CD14-positive monocyte (primary cell): ENCODE measurements at regions of chr7 and their contacts with region 1.

Region 1: DNA sequence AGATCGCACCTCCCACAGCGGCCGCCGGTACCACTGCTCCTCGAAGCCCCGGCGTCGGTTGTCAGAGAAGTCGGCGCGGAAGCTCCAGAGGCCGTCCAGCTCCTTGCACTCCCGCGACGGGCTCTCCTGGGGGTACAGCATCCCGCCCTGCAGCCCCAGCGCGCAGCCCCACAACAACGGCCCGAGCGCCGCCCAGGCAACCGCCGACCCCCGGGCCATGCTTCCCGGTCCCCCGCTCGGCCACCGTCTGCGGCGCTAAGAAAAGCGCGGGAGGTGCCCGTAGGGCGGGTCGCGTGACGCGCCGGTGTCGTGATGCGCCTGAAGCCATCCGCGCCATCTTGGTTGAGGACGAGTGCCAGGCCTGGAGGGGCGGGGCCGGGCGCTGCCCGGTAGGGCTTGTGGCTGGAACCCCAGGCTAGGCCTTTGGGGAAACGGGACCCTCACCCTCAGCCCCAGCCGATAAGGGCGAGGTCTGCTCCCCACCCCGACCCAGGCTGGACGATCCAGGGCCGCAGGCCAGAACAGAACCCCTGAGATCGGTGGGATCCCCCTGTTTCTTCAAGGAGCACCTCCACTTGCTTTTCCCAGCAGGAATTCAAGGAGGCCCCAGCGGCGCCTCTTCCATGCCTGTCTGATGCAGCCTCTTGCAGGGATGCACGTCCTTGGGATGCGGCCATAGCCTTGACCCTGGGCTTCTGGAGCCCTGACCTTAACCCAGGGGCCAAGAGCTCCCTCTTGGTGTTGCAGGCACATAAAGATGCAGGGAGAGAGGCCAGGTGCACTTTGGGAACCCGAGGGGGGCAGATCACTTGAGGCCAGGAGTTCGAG is at the start of gene GUSB:
- DNase-seq: peak; percentile 78 to 81 (median 79)
- H3K4me3 ChIP-seq: peak within 1 kb of the TSS; percentile 62 to 87 (median 79)
- H3K4me3 Mint-ChIP-seq: peak within 1 kb of the TSS; percentile 83 to 91
- H3K27ac ChIP-seq: peak within 1 kb of the TSS; percentile 96
- H3K27ac Mint-ChIP-seq: peak within 1 kb of the TSS; percentile 96 to 99 (median 98)
- H3K4me1 ChIP-seq: peaks cover 21 to 32% of the 10 kb centered on the region in 2 donors
- H3K4me1 Mint-ChIP-seq: peaks cover 7% of the 10 kb centered on the region
- H3K27me3 ChIP-seq: no peaks in the 10 kb centered on the region
- H3K27me3 Mint-ChIP-seq: peaks cover 0 to 2% (median 0%) of the 10 kb centered on the region in 3 donors
- CTCF ChIP-seq: no peak
- polyA plus RNA-seq, gene GUSB: 113 to 121 (median 115) TPM

Region 2: GRCh38 chr7:65750511-65751344 is 231.5 kb before region 1 on chr7:
- intact Hi-C with region 1: loop called in 1 of 2 experiments (anchors 5 kb)
- DNase-seq: peak; percentile 81 to 90 (median 83)
- H3K4me3 ChIP-seq: peak overlapping the region; percentile 76 to 96 (median 89)
- H3K4me3 Mint-ChIP-seq: peak overlapping the region; percentile 87 to 98
- H3K27ac ChIP-seq: peak overlapping the region; percentile 51 to 90
- H3K27ac Mint-ChIP-seq: peak overlapping the region; percentile 89 to 94 (median 90)
- H3K4me1 ChIP-seq: peaks cover 11 to 12% of the 10 kb centered on the region in 2 donors
- H3K4me1 Mint-ChIP-seq: peaks cover 15% of the 10 kb centered on the region
- H3K27me3 ChIP-seq: no peaks in the 10 kb centered on the region
- H3K27me3 Mint-ChIP-seq: peaks cover 0 to 2% (median 0%) of the 10 kb centered on the region in 3 donors
- CTCF ChIP-seq: no peak

Region 3: DNA sequence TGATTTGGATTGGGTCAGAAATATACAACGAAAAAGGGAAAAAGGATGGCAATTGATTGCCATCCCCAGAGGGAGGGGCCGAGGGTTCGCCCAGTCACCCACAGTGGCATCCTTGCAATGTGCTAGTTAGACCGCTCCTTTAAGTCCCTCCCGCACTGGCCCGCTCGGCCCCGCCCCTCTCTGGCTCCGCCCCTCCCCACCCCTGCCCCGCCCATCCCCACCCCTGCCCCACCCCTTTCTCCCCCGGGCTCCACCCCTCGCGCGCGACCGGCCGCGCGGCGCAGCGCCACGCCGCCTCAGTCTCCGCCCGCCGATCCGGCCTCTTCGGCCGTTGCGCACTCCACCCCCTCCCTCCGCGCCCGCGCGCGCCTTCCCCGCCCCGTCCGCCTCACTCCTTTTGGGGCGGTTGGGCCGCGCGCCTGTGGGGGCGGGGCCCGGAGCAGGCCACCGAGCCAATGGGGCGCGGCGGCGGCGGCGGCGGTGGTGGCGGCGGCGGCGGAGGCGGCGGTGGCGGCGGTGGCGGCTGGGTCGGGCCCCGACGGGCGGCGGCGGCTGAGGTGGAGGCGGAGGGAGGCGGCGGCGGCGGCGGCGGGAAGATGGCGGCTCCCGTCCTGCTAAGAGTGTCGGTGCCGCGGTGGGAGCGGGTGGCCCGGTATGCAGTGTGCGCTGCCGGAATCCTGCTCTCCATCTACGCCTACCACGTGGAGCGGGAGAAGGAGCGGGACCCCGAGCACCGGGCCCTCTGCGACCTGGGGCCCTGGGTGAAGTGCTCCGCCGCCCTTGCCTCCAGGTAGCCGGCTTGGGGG is 109.2 kb before region 1 on chr7 and contains the start of gene VKORC1L1:
- intact Hi-C with region 1: loop called (anchors 5 kb)
- DNase-seq: peak; percentile 91 to 95 (median 95)
- H3K4me3 ChIP-seq: peak within 1 kb of the TSS; percentile 72 to 97 (median 76)
- H3K4me3 Mint-ChIP-seq: peak within 1 kb of the TSS; percentile 80 to 91
- H3K27ac ChIP-seq: peak within 1 kb of the TSS in 1 of 2 donors; percentile 8
- H3K27ac Mint-ChIP-seq: peak within 1 kb of the TSS in 6 of 7 donors; percentile 86 to 96 (median 92)
- H3K4me1 ChIP-seq: peaks cover 30 to 32% of the 10 kb centered on the region in 2 donors
- H3K4me1 Mint-ChIP-seq: peaks cover 26% of the 10 kb centered on the region
- H3K27me3 ChIP-seq: no peaks in the 10 kb centered on the region
- H3K27me3 Mint-ChIP-seq: no peaks in the 10 kb centered on the region
- CTCF ChIP-seq: no peak
- polyA plus RNA-seq, gene VKORC1L1: 1.9 to 3.2 (median 2.7) TPM

Region 4: GRCh38 chr7:66075590-66076461 is 93.6 kb after region 1 on chr7 and contains the start of gene ASL:
- intact Hi-C with region 1: loop called in 1 of 2 experiments (anchors 10 kb)
- DNase-seq: peak; percentile 89 to 92 (median 89)
- H3K4me3 ChIP-seq: peak within 1 kb of the TSS; percentile 83 to 95 (median 95)
- H3K4me3 Mint-ChIP-seq: peak within 1 kb of the TSS; percentile 81 to 90
- H3K27ac ChIP-seq: peak within 1 kb of the TSS; percentile 50 to 94
- H3K27ac Mint-ChIP-seq: peak within 1 kb of the TSS; percentile 69 to 92 (median 86)
- H3K4me1 ChIP-seq: peaks cover 17 to 19% of the 10 kb centered on the region in 2 donors
- H3K4me1 Mint-ChIP-seq: peaks cover 17% of the 10 kb centered on the region
- H3K27me3 ChIP-seq: no peaks in the 10 kb centered on the region
- H3K27me3 Mint-ChIP-seq: peaks cover 1 to 8% (median 4%) of the 10 kb centered on the region in 3 donors
- CTCF ChIP-seq: no peak
- polyA plus RNA-seq, gene ASL: 29.7 to 51.6 (median 35.9) TPM

Region 5: GRCh38 chr7:66150471-66150870 is 168.3 kb after region 1 on chr7:
- intact Hi-C with region 1: no loop called
- DNase-seq: no peak
- H3K4me3 ChIP-seq: no peak overlapping the region
- H3K4me3 Mint-ChIP-seq: no peak overlapping the region
- H3K27ac ChIP-seq: peak overlapping the region in 1 of 2 donors; percentile 56
- H3K27ac Mint-ChIP-seq: peak overlapping the region in 5 of 7 donors; percentile 24 to 81 (median 56)
- H3K4me1 ChIP-seq: no peaks in the 10 kb centered on the region
- H3K4me1 Mint-ChIP-seq: peaks cover 6% of the 10 kb centered on the region
- H3K27me3 ChIP-seq: no peaks in the 10 kb centered on the region
- H3K27me3 Mint-ChIP-seq: no peaks in the 10 kb centered on the region
- CTCF ChIP-seq: no peak

Region 6: GRCh38 chr7:66493235-66494181 is 511.3 kb after region 1 on chr7:
- intact Hi-C with region 1: loop called in 1 of 2 experiments (anchors 5 kb)
- DNase-seq: peak; percentile 98
- H3K4me3 ChIP-seq: peak overlapping the region; percentile 54 to 75 (median 73)
- H3K4me3 Mint-ChIP-seq: peak overlapping the region; percentile 80 to 89
- H3K27ac ChIP-seq: peak overlapping the region; percentile 83 to 97
- H3K27ac Mint-ChIP-seq: peak overlapping the region; percentile 97 to 99 (median 98)
- H3K4me1 ChIP-seq: peaks cover 13 to 23% of the 10 kb centered on the region in 2 donors
- H3K4me1 Mint-ChIP-seq: peaks cover 22% of the 10 kb centered on the region
- H3K27me3 ChIP-seq: no peaks in the 10 kb centered on the region
- H3K27me3 Mint-ChIP-seq: peaks cover 0 to 7% (median 2%) of the 10 kb centered on the region in 3 donors
- CTCF ChIP-seq: peak; percentile 24

Region 7: GRCh38 chr7:66731986-66732385 is 749.8 kb after region 1 on chr7:
- intact Hi-C with region 1: no loop called
- DNase-seq: no peak
- H3K4me3 ChIP-seq: no peak overlapping the region
- H3K4me3 Mint-ChIP-seq: no peak overlapping the region
- H3K27ac ChIP-seq: no peak overlapping the region
- H3K27ac Mint-ChIP-seq: no peak overlapping the region
- H3K4me1 ChIP-seq: no peaks in the 10 kb centered on the region
- H3K4me1 Mint-ChIP-seq: peaks cover 5% of the 10 kb centered on the region
- H3K27me3 ChIP-seq: no peaks in the 10 kb centered on the region
- H3K27me3 Mint-ChIP-seq: peaks cover 0 to 5% (median 0%) of the 10 kb centered on the region in 3 donors
- CTCF ChIP-seq: no peak